Transverse colon (tissue), 4 donors: ENCODE measurements at regions of chr11 and their contacts with region 1.

Region 1: GRCh38 chr11:55572548-55572947 is 620 bp downstream of the OR4C16 start:
- DNase-seq: no peak
- H3K4me3 ChIP-seq: no peak overlapping the region
- H3K27ac ChIP-seq: no peak overlapping the region
- H3K4me1 ChIP-seq: no peaks in the 10 kb centered on the region
- H3K27me3 ChIP-seq: no peaks in the 10 kb centered on the region
- CTCF ChIP-seq: no peak
- EP300 ChIP-seq: no peak
- POLR2A ChIP-seq: no peak

Region 2: GRCh38 chr11:55554169-55554568 is 18.4 kb before region 1 on chr11 and contains the start of gene OR4C15:
- in situ Hi-C with region 1: no loop called
- intact Hi-C with region 1: no loop called
- DNase-seq: no peak
- H3K4me3 ChIP-seq: no peak within 1 kb of the TSS
- H3K27ac ChIP-seq: no peak within 1 kb of the TSS
- H3K4me1 ChIP-seq: no peaks in the 10 kb centered on the region
- H3K27me3 ChIP-seq: no peaks in the 10 kb centered on the region
- CTCF ChIP-seq: no peak
- EP300 ChIP-seq: no peak
- POLR2A ChIP-seq: no peak
- total RNA-seq, gene OR4C15: not detected

Region 3: GRCh38 chr11:55658031-55658573 is 85.6 kb after region 1 on chr11:
- in situ Hi-C with region 1: loop called in 1 of 4 experiments (anchors 25 kb)
- intact Hi-C with region 1: no loop called
- DNase-seq: no peak
- H3K4me3 ChIP-seq: no peak overlapping the region
- H3K27ac ChIP-seq: no peak overlapping the region
- H3K4me1 ChIP-seq: no peaks in the 10 kb centered on the region
- H3K27me3 ChIP-seq: no peaks in the 10 kb centered on the region
- CTCF ChIP-seq: no peak
- EP300 ChIP-seq: no peak
- POLR2A ChIP-seq: no peak